PC-3 (cell line): ENCODE measurements at regions of chr12 and their contacts with region 1.

Region 1: DNA sequence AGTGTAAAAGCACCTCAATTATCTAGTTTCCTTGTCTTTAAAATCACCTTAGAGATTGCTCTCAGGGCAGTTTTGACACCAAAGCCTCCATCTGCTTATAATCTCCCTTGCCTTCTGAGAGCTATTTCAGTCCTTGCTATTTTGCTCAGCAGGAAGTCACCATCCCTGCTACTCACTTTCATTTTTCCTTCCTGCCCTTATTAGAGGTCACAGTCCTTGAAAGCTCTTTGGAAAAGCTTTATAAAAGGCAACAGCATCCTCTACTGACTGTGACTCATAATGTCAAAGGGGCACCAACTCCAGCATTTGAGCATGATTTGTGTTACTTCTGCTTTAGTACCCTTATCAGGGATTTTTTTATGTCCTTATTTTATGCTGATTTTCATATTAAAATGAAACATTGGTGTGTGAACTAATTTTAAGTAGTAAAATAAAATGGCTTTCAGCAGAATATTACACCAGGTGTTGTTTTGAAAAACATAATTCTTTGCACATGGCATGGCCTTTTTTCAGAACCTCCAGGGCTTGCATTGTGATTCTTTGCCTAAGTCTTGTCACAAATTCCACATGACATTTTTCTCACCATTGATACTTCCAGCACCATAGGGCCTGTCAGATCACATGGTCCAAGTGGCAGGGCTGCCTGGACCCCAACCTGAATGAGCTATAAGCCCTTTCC is 213.0 kb downstream of the ADAMTS20 start:
- DNase-seq: peak; percentile 70
- ATAC-seq: peak; percentile 82
- H3K4me3 ChIP-seq: no peak overlapping the region; the same call in 1 of the 2 replicates
- H3K27ac ChIP-seq: peak overlapping the region; percentile 15; the same call in 1 of the 2 replicates
- H3K4me1 ChIP-seq: peaks cover 25% of the 10 kb centered on the region
- H3K27me3 ChIP-seq: no peaks in the 10 kb centered on the region
- CTCF ChIP-seq: peak; percentile 73

Region 2: GRCh38 chr12:42482445-42483237 is 856.3 kb before region 1 on chr12:
- CTCF ChIA-PET with region 1: interaction called, 4 read pairs
- POLR2A ChIA-PET with region 1: no interaction called
- intact Hi-C with region 1: loop called (anchors 2 kb)
- DNase-seq: peak; percentile 73
- ATAC-seq: peak; percentile 82
- H3K4me3 ChIP-seq: peak overlapping the region; percentile 78
- H3K27ac ChIP-seq: peak overlapping the region; percentile 54
- H3K4me1 ChIP-seq: peaks cover 18% of the 10 kb centered on the region; the same call in 1 of the 2 replicates
- H3K27me3 ChIP-seq: no peaks in the 10 kb centered on the region
- CTCF ChIP-seq: peak; percentile 94